ENCODE measurements at regions of chr6 and their contacts with region 1.

Region 1: DNA sequence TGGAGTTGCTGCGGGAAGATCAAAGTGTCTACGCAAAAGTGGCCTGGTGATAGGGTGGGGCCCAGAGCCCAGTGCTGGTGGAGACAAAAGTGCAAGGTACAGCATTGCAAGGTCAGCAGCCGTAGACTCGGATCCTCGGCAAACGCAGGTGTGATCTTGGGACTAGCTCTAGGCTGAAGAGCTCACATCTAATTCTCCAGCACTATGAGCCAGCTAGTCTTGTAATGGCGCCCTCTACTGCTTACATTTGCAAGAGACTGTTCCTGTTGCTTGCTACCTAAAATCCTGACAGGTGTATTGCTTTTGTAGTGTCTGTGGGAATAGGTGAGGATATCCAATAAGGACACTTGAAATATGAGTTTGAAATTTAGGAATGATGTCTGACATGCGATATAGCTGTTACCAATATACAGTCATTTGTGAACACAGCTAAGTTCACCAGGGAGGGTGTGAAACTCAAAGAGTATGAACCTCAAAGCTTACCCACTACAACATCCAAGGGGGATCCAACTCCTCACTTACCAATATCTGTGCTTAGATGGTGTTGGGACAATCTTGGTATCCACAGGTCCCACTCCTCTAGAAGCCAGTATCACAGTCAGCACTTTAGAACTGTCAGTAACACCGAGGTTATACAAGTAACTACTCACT is 58.4 kb downstream of the PDE7B start:
- DNase-seq: peak; percentile 61
- ATAC-seq: peak; percentile 99
- H3K4me3 Mint-ChIP-seq: no peak overlapping the region
- H3K27ac Mint-ChIP-seq: no peak overlapping the region
- H3K4me1 Mint-ChIP-seq: no peaks in the 10 kb centered on the region
- H3K27me3 Mint-ChIP-seq: no peaks in the 10 kb centered on the region
- CTCF ChIP-seq: peak; percentile 49; the same call in 1 of the 2 replicates

Region 2: DNA sequence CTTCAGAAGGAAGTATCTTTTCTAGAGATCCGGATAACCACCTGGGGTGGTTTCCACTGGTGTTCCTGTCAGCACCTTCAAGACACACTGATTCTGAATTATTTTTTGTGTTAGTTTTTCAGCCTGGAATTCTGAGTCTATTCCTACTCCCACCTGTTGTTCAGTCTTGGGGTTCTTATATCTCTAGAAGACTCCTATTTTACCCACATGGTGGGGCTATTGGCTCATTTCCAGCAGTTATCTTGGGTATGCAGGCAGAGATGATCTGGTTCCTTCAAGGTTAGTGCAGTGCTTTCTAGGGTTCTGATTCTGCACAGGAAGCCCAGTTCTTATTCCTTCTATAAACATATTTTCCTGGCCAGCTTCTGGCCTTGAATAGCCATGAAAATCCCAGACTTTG is 234.0 kb before region 1 on chr6:
- CTCF ChIA-PET with region 1: interaction called, 13 read pairs
- POLR2A ChIA-PET with region 1: no interaction called
- DNase-seq: peak; percentile 18
- ATAC-seq: peak; percentile 99
- H3K4me3 Mint-ChIP-seq: no peak overlapping the region
- H3K27ac Mint-ChIP-seq: no peak overlapping the region
- H3K4me1 Mint-ChIP-seq: peaks cover 4% of the 10 kb centered on the region; the same call in 1 of the 2 replicates
- H3K27me3 Mint-ChIP-seq: no peaks in the 10 kb centered on the region
- CTCF ChIP-seq: peak; percentile 17; the same call in 1 of the 2 replicates

Region 3: DNA sequence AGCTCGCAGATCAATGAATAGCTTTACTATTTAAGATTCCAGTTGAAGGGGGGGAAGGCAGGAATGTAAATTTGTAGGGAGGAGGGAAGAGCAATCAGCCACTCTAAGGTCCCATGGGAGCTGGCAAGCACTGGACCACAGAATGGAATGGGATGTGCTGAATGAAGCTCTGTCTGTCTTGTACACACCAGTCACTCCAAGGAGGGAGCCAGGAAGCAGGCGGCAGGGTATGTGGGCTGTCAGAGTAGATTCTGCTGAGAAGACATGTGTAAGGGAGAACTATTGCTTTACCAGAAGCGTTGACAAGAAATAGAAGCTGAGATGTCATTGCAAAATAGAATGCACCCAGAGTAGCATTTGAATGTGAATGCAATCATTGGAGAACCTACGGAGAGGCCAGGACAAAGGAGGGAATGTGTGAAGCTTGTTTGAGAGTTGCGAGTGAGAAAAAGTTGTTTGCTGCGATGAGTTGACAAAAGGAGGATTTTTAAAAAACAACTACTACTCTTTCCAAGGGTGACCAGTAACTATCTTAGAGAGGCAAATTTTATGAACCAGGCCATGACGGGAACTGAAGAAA is 83.5 kb before region 1 on chr6:
- CTCF ChIA-PET with region 1: interaction called, 11 read pairs
- POLR2A ChIA-PET with region 1: no interaction called
- DNase-seq: no peak
- ATAC-seq: peak; percentile 74
- H3K4me3 Mint-ChIP-seq: peak overlapping the region; percentile 11
- H3K27ac Mint-ChIP-seq: peak overlapping the region; percentile 20
- H3K4me1 Mint-ChIP-seq: peaks cover 13% of the 10 kb centered on the region
- H3K27me3 Mint-ChIP-seq: no peaks in the 10 kb centered on the region
- CTCF ChIP-seq: no peak

Region 4: DNA sequence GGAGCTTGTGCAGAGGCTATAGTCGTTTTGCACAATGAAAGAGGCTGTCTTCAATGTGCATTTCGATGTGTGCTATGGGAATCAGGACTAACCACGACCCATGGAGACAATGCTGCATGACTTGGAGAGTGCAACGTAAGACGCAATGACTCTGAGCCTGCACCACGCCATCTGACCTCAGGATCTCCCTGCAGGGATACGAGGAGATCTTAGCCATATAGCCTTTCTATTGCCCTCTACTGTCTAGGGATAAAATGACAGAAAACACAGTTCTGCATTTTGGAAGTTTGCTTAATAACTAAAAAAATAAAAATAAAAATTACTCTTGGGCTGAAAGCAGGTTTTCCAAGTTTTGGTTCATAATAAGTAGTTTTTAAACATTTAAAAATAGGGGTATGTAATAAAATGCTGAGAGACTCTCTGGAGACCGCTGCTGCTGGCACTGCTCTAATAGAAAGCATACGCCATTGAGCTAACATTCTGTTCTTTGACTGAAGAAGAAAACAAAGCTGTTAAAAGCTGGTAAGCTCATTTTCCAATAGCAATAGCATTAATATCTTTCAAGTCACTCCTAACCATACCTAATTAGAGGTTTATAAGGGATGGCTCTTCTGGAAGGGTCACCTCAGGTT is 28.8 kb after region 1 on chr6:
- CTCF ChIA-PET with region 1: interaction called, 11 read pairs
- POLR2A ChIA-PET with region 1: no interaction called
- DNase-seq: no peak
- ATAC-seq: peak; percentile 98
- H3K4me3 Mint-ChIP-seq: no peak overlapping the region
- H3K27ac Mint-ChIP-seq: no peak overlapping the region
- H3K4me1 Mint-ChIP-seq: peaks cover 11% of the 10 kb centered on the region
- H3K27me3 Mint-ChIP-seq: no peaks in the 10 kb centered on the region
- CTCF ChIP-seq: no peak

Region 5: GRCh38 chr6:136383268-136383937 is 473.5 kb after region 1 on chr6:
- CTCF ChIA-PET with region 1: no interaction called
- POLR2A ChIA-PET with region 1: no interaction called
- DNase-seq: no peak
- ATAC-seq: no peak
- H3K4me3 Mint-ChIP-seq: no peak overlapping the region
- H3K27ac Mint-ChIP-seq: 0 out of 2 replicates have a peak overlapping the region, but pooled peaks have one; percentile 32
- H3K4me1 Mint-ChIP-seq: peaks cover 13% of the 10 kb centered on the region
- H3K27me3 Mint-ChIP-seq: no peaks in the 10 kb centered on the region
- CTCF ChIP-seq: no peak